ENCODE measurements at regions of chr2 and their contacts with region 1.

Region 1: GRCh38 chr2:28452534-28453081 is 43.3 kb upstream of the PLB1 start:
- DNase-seq: peak; percentile 66 to 77
- ATAC-seq: peak; percentile 82 to 91 (median 85)
- H3K4me3 ChIP-seq: no peak overlapping the region
- H3K27ac ChIP-seq: peak overlapping the region in 1 of 10 donors; percentile 10
- H3K4me1 ChIP-seq: peaks cover 0 to 34% (median 0%) of the 10 kb centered on the region in 9 donors
- H3K27me3 ChIP-seq: no peaks in the 10 kb centered on the region
- CTCF ChIP-seq: peak; percentile 72 to 93 (median 89)

Region 2: DNA sequence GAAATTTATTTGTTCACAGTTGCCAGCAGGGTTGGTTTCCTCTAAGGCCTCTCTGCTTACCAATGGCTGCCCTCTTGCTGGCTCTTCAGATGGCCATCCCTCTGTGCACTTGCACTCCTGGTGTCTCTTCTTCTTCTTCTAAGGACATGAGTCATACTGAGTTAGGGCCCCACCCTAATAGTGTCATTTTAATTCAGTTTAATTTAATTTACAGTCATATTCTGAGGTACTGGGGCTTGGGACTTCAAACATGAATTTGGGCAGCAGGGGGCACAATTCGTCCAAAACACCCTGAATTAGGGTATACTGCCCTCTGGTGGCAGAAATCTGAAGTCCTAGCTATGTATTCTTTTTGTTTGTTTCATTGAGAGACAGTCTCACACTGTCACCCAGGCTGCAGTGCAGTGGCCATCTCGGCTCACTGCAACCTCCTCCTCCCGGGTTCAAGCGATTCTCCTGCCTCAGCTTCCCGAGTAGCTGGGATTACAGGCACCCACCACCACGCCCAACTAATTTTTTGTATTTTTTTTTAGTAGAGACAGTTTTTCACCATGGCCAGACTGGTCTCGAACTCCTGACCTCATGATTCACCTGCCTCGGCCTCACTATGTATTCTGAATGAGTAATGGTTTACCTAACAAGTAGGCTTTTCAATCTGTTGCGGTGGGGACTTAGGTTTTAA is 769.1 kb before region 1 on chr2:
- intact Hi-C with region 1: loop called in 2 of 10 experiments (anchors 2 to 5 kb)
- DNase-seq: peak; percentile 20 to 89
- ATAC-seq: peak; percentile 61 to 88 (median 80)
- H3K4me3 ChIP-seq: no peak overlapping the region
- H3K27ac ChIP-seq: peak overlapping the region in 1 of 10 donors; percentile 55
- H3K4me1 ChIP-seq: peaks cover 0 to 22% (median 0%) of the 10 kb centered on the region in 9 donors
- H3K27me3 ChIP-seq: no peaks in the 10 kb centered on the region
- CTCF ChIP-seq: peak; percentile 85 to 99 (median 97)

Region 3: GRCh38 chr2:27703638-27704341 is 748.8 kb before region 1 on chr2:
- intact Hi-C with region 1: loop called (anchors 1 to 5 kb)
- DNase-seq: peak; percentile 70 to 89
- ATAC-seq: peak; percentile 32 to 76 (median 62)
- H3K4me3 ChIP-seq: no peak overlapping the region
- H3K27ac ChIP-seq: peak overlapping the region in 2 of 10 donors; percentile 36 to 79
- H3K4me1 ChIP-seq: peaks cover 7 to 45% (median 28%) of the 10 kb centered on the region in 9 donors
- H3K27me3 ChIP-seq: no peaks in the 10 kb centered on the region
- CTCF ChIP-seq: peak; percentile 88 to 95 (median 93)

Region 4: GRCh38 chr2:27754138-27754588 is 698.4 kb before region 1 on chr2:
- intact Hi-C with region 1: loop called in 9 of 10 experiments (anchors 2 to 10 kb)
- DNase-seq: peak; percentile 78 to 82
- ATAC-seq: peak; percentile 66 to 92 (median 83)
- H3K4me3 ChIP-seq: no peak overlapping the region
- H3K27ac ChIP-seq: no peak overlapping the region
- H3K4me1 ChIP-seq: peaks cover 0 to 22% (median 11%) of the 10 kb centered on the region in 9 donors
- H3K27me3 ChIP-seq: no peaks in the 10 kb centered on the region
- CTCF ChIP-seq: peak; percentile 64 to 93 (median 83)

Measured in heart right ventricle (tissue), 16 donors.